Activated CD4-positive, alpha-beta T cell treated with anti-CD3 and anti-CD28 coated beads for 36 hours (primary cell): ENCODE measurements at regions of chr10 and their contacts with region 1.

Region 1: GRCh38 chr10:49606981-49607535 is 3.1 kb upstream of the SLC18A3 start:
- DNase-seq: peak; percentile 86
- ATAC-seq: peak; percentile 74
- H3K4me3 Mint-ChIP-seq: no peak overlapping the region
- H3K27ac Mint-ChIP-seq: no peak overlapping the region
- H3K4me1 Mint-ChIP-seq: peaks cover 2% of the 10 kb centered on the region
- H3K27me3 Mint-ChIP-seq: peaks cover 63% of the 10 kb centered on the region

Region 2: GRCh38 chr10:49398000-49398861 is 208.8 kb before region 1 on chr10:
- CTCF ChIA-PET with region 1: no interaction called
- POLR2A ChIA-PET with region 1: no interaction called
- intact Hi-C with region 1: loop called (anchors 2 to 5 kb)
- DNase-seq: peak; percentile 78
- ATAC-seq: peak; percentile 88
- H3K4me3 Mint-ChIP-seq: no peak overlapping the region
- H3K27ac Mint-ChIP-seq: no peak overlapping the region
- H3K4me1 Mint-ChIP-seq: peaks cover 8% of the 10 kb centered on the region
- H3K27me3 Mint-ChIP-seq: peaks cover 60% of the 10 kb centered on the region

Region 3: GRCh38 chr10:49679480-49679893 is 72.4 kb after region 1 on chr10 and contains the start of gene C10orf53:
- CTCF ChIA-PET with region 1: no interaction called
- POLR2A ChIA-PET with region 1: no interaction called
- intact Hi-C with region 1: loop called in 1 of 2 experiments (anchors 1 kb)
- DNase-seq: peak; percentile 73
- ATAC-seq: peak; percentile 70
- H3K4me3 Mint-ChIP-seq: no peak within 1 kb of the TSS
- H3K27ac Mint-ChIP-seq: no peak within 1 kb of the TSS
- H3K4me1 Mint-ChIP-seq: peaks cover 5% of the 10 kb centered on the region
- H3K27me3 Mint-ChIP-seq: peaks cover 38% of the 10 kb centered on the region
- total RNA-seq, gene C10orf53: not detected

Region 4: GRCh38 chr10:49761789-49762565 is 154.9 kb after region 1 on chr10 and contains the start of gene OGDHL:
- CTCF ChIA-PET with region 1: no interaction called
- POLR2A ChIA-PET with region 1: no interaction called
- intact Hi-C with region 1: loop called (anchors 1 to 2 kb)
- DNase-seq: peak; percentile 78
- ATAC-seq: peak; percentile 66
- H3K4me3 Mint-ChIP-seq: peak within 1 kb of the TSS; percentile 27
- H3K27ac Mint-ChIP-seq: no peak within 1 kb of the TSS
- H3K4me1 Mint-ChIP-seq: peaks cover 4% of the 10 kb centered on the region
- H3K27me3 Mint-ChIP-seq: peaks cover 36% of the 10 kb centered on the region
- total RNA-seq, gene OGDHL: 0.44 to 0.73 TPM